CD4-positive, alpha-beta memory T cell (primary cell): ENCODE measurements at regions of chr6 and their contacts with region 1.

Region 1: DNA sequence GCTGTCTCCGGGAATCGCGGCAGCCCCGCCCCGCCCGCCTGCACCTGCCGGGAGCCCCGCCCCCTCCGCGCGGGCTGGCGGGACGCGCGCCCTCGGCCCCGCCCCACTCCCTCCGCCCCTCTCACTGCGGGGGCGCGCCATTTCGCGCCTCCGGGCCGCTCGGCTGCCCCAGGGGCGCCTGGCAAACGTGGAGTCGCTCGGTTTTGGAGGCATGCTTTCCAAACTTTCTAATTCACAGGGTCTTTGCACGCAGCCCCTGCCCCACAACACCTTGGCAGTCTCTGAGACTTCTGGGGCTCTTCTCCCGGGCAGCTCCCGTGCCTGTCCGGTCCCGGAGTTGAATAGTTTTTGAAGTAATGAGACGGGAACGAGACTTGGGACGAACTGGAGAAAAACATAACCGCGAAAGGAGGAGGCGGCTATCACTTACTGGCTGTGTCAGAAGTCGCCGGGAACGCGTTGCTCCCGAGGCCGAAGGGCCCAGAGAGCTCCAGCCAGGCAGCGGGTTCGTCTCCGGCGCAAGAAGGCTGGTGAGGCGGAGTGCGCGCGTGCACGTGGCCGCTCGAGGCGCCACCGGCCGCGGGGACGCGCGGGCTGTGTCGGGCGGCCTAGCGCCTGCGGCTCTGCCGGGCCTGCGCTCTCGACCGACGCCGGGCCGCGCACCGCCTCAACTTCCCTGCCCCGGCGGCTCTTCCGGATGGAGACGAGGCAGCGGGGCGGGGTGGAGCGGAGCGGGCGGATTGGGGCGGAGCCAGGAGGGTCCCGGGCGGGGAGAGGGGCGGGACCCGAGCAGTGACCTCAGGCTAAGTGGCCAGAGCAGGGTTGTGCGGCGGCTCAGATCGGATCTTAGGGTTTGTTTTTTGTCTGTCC is at the start of gene MCM9:
- DNase-seq: peak; percentile 84 to 88 (median 85)
- H3K4me3 ChIP-seq: peak within 1 kb of the TSS; percentile 88 to 98
- H3K4me3 Mint-ChIP-seq: peak within 1 kb of the TSS; percentile 90 to 94 (median 91)
- H3K27ac ChIP-seq: peak within 1 kb of the TSS; percentile 84
- H3K27ac Mint-ChIP-seq: peak within 1 kb of the TSS; percentile 89 to 96 (median 93)
- H3K4me1 ChIP-seq: peaks cover 19% of the 10 kb centered on the region
- H3K4me1 Mint-ChIP-seq: peaks cover 21 to 43% (median 25%) of the 10 kb centered on the region in 4 donors
- H3K27me3 ChIP-seq: no peaks in the 10 kb centered on the region
- H3K27me3 Mint-ChIP-seq: no peaks in the 10 kb centered on the region
- total RNA-seq, gene MCM9: 33.8 to 36.6 TPM

Region 2: DNA sequence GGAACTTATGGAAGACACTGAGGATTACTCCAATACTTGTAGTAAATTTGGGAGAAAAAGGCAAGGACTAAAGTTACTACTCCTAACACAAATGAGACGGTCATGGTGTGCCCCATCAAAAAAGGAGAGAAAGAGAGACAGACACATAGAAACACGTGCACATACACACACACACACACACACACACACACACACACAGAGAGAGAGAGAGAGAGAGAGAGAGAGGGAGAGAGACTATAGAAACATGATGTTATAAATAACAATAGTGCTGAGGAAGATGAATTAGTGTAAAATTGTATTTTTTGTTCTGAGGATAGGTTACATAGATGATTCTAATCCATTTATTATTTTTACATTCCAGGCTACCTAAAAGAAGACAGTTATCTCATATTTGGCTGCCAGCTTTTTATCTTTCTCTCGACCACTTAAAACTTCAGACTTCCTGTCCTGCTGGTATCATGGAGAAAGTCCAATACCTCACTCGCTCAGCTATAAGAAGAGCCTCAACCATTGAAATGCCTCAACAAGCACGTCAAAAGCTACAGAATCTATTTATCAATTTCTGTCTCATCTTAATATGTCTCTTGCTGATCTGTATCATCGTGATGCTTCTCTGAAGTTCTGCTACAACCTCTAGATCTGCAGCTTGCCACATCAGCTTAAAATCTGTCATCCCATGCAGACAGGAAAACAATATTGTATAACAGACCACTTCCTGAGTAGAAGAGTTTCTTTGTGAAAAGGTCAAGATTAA is 376.1 kb before region 1 on chr6:
- CTCF ChIA-PET with region 1: no interaction called
- POLR2A ChIA-PET with region 1: interaction called, 12 read pairs
- intact Hi-C with region 1: no loop called
- DNase-seq: peak; percentile 61 to 77 (median 64)
- H3K4me3 ChIP-seq: peak overlapping the region in 1 of 2 donors; percentile 21
- H3K4me3 Mint-ChIP-seq: peak overlapping the region; percentile 61 to 90 (median 80)
- H3K27ac ChIP-seq: peak overlapping the region; percentile 53
- H3K27ac Mint-ChIP-seq: peak overlapping the region; percentile 83 to 99 (median 97)
- H3K4me1 ChIP-seq: peaks cover 30% of the 10 kb centered on the region
- H3K4me1 Mint-ChIP-seq: peaks cover 31 to 57% (median 35%) of the 10 kb centered on the region in 4 donors
- H3K27me3 ChIP-seq: no peaks in the 10 kb centered on the region
- H3K27me3 Mint-ChIP-seq: no peaks in the 10 kb centered on the region

Region 3: GRCh38 chr6:118921084-118921483 is 13.6 kb before region 1 on chr6:
- CTCF ChIA-PET with region 1: no interaction called
- POLR2A ChIA-PET with region 1: no interaction called
- intact Hi-C with region 1: no loop called
- DNase-seq: no peak
- H3K4me3 ChIP-seq: no peak overlapping the region
- H3K4me3 Mint-ChIP-seq: no peak overlapping the region
- H3K27ac ChIP-seq: no peak overlapping the region
- H3K27ac Mint-ChIP-seq: no peak overlapping the region
- H3K4me1 ChIP-seq: no peaks in the 10 kb centered on the region
- H3K4me1 Mint-ChIP-seq: peaks cover 0 to 13% (median 5%) of the 10 kb centered on the region in 4 donors
- H3K27me3 ChIP-seq: no peaks in the 10 kb centered on the region
- H3K27me3 Mint-ChIP-seq: no peaks in the 10 kb centered on the region

Region 4: DNA sequence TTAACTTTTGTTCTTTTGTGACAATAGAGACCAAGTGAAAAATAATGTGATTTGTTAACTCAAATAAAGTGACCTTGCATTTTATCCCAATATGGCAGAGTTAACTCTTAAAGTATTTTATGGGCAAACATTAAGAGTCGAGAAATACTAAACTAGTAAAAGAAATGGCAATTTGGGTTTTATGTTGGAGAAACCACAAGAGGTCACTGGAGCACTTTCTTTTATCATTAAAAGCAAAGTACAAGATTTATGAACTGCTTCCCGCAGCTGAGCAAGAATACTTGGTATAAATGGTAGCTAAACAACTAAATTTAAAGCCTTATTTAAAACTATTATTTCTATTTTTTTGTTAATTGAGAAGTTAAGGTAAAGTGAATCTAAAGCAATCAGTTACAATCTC is 33.7 kb after region 1 on chr6:
- CTCF ChIA-PET with region 1: no interaction called
- POLR2A ChIA-PET with region 1: no interaction called
- intact Hi-C with region 1: no loop called
- DNase-seq: peak in 3 of 5 donors; percentile 2 to 9 (median 2)
- H3K4me3 ChIP-seq: no peak overlapping the region
- H3K4me3 Mint-ChIP-seq: no peak overlapping the region
- H3K27ac ChIP-seq: no peak overlapping the region
- H3K27ac Mint-ChIP-seq: no peak overlapping the region
- H3K4me1 ChIP-seq: no peaks in the 10 kb centered on the region
- H3K4me1 Mint-ChIP-seq: no peaks in the 10 kb centered on the region
- H3K27me3 ChIP-seq: no peaks in the 10 kb centered on the region
- H3K27me3 Mint-ChIP-seq: no peaks in the 10 kb centered on the region

Region 5: DNA sequence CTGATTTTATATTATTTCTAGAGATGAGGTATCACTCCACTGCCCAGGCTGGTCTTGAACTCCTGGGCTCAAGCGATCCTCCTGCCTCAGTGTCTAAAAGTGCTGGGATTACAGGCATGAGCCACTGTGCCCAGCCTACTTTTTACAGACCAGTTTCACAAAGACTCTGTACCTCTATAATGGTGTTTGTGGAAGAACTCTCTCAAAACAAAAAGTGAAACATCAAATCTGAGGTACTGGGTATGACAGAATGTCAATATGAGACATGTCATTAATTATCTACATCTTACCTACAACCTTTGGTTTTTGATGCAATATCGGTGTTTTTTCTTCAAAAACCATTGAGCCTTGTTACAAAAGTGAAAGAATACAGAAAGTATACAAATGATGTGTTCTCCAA is 49.6 kb after region 1 on chr6:
- CTCF ChIA-PET with region 1: no interaction called
- POLR2A ChIA-PET with region 1: no interaction called
- intact Hi-C with region 1: no loop called
- DNase-seq: no peak
- H3K4me3 ChIP-seq: no peak overlapping the region
- H3K4me3 Mint-ChIP-seq: no peak overlapping the region
- H3K27ac ChIP-seq: no peak overlapping the region
- H3K27ac Mint-ChIP-seq: no peak overlapping the region
- H3K4me1 ChIP-seq: no peaks in the 10 kb centered on the region
- H3K4me1 Mint-ChIP-seq: no peaks in the 10 kb centered on the region
- H3K27me3 ChIP-seq: no peaks in the 10 kb centered on the region
- H3K27me3 Mint-ChIP-seq: no peaks in the 10 kb centered on the region